ENCODE measurements at regions of chr19 and their contacts with region 1.

Region 1: GRCh38 chr19:48110350-48110966 is at the start of gene PLA2G4C:
- DNase-seq: peak; percentile 95
- ATAC-seq: peak; percentile 96
- total RNA-seq, gene PLA2G4C: 38.6 TPM

Region 2: DNA sequence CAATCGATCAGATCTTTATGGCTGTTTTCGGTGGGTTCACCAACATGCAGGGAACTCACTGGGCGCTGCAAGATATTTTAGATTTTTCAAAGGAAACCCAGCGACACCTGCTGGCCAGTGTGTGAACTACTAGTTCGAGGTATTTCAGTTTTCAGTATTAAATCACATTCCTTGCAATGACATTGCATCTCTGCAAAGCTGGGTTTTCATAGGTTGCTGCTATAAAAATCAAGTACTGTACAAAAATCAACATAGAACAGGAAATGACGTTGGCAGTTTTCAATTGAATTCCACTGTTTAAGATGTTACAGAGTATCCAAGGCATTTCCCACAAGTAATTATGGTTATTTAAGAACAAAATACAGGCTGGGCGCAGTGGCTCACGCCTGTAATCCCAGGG is 42.1 kb after region 1 on chr19:
- intact Hi-C with region 1: loop called (anchors 2 kb)
- DNase-seq: peak; percentile 63
- ATAC-seq: peak; percentile 56